Dendritic cell treated with granulocyte-macrophage colony-stimulating factor and Interleukin-4, amounts not matched to agents 40 ng/mL and 50 ng/mL, for 4 days (primary cell): ENCODE measurements at regions of chr1 and their contacts with region 1.

Region 1: DNA sequence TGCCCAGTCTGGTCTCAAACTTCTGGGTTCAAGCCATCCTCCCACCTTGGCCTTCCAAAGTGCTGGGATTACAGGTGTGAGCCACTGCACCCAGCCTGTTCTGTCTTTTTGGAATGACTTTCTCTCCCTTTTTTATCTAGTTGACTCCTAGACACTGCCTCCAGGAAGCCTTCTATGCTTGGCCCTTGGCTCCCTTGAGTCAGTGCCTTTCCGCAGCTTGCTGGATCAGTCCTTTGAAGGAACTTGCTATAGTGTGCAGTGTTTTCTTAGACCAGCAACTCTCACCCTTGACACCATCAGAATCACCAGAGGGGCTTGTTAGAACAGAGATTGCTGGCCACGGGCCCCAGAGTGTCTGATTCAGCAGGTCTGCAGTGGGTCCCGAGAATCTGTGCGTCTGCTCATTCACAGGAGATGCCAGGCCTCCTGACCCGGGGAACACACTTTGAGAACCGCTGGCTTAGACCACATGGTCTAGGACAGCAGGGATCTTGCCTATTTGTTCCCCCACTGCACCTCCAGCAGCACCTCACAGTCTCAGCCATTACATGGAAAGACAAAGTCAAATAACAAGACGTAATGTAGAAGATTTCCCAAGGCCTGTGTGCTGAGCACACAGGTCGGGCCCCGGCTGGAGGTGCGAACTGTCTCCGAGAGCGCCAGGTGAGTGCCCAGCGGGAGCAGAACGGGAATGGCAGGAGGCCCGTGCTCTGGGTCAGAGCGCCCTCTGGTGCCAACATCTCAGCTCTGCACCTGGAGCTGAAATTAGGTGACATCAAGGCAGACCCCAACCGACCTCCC is 27.4 kb upstream of the CTPS1 start:
- H3K4me3 Mint-ChIP-seq: peak overlapping the region; percentile 7
- H3K27ac Mint-ChIP-seq: no peak overlapping the region
- H3K4me1 Mint-ChIP-seq: peaks cover 30% of the 10 kb centered on the region
- H3K27me3 Mint-ChIP-seq: peaks cover 50% of the 10 kb centered on the region

Region 2: GRCh38 chr1:40774266-40774998 is 177.7 kb before region 1 on chr1:
- intact Hi-C with region 1: loop called (anchors 10 kb)
- H3K4me3 Mint-ChIP-seq: no peak overlapping the region
- H3K27ac Mint-ChIP-seq: no peak overlapping the region
- H3K4me1 Mint-ChIP-seq: peaks cover 15% of the 10 kb centered on the region
- H3K27me3 Mint-ChIP-seq: no peaks in the 10 kb centered on the region